ENCODE measurements at regions of chr4 and their contacts with region 1.

Region 1: GRCh38 chr4:73069338-73070073 is at the start of gene COX18:
- DNase-seq: peak; percentile 96
- H3K4me3 Mint-ChIP-seq: peak within 1 kb of the TSS; percentile 92
- H3K27ac Mint-ChIP-seq: peak within 1 kb of the TSS; percentile 99
- H3K4me1 Mint-ChIP-seq: peaks cover 52% of the 10 kb centered on the region
- H3K27me3 Mint-ChIP-seq: no peaks in the 10 kb centered on the region
- total RNA-seq, gene COX18: 19.9 and 22.2 TPM in 2 replicates

Region 2: GRCh38 chr4:73086095-73086868 is 16.8 kb after region 1 on chr4:
- intact Hi-C with region 1: loop called (anchors 1 kb)
- DNase-seq: no peak
- H3K4me3 Mint-ChIP-seq: peak overlapping the region; percentile 56
- H3K27ac Mint-ChIP-seq: no peak overlapping the region
- H3K4me1 Mint-ChIP-seq: peaks cover 12% of the 10 kb centered on the region
- H3K27me3 Mint-ChIP-seq: no peaks in the 10 kb centered on the region

Region 3: GRCh38 chr4:73222466-73223257 is 153.2 kb after region 1 on chr4:
- intact Hi-C with region 1: loop called (anchors 1 kb)
- DNase-seq: peak; percentile 60
- H3K4me3 Mint-ChIP-seq: no peak overlapping the region
- H3K27ac Mint-ChIP-seq: no peak overlapping the region
- H3K4me1 Mint-ChIP-seq: peaks cover 37% of the 10 kb centered on the region
- H3K27me3 Mint-ChIP-seq: no peaks in the 10 kb centered on the region

Region 4: DNA sequence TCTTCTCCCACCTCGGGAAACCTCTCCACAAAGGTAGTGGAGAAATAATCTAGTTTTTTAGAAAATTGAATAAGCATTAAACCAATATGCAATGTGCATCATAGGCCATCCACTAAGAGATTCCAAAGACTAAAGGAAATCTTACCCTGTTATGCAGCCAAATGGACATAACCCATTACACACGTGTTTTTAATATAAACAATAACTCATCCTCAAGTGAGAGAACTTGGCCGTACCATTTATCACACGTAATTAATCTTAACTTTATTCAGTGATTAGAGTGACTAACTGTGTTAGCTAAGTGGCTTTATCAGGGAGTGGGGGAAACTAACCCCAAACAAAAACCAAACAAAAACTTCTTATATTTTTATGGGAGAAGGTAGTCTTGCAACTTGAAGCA is 469.9 kb after region 1 on chr4:
- intact Hi-C with region 1: loop called (anchors 5 kb)
- DNase-seq: no peak
- H3K4me3 Mint-ChIP-seq: no peak overlapping the region
- H3K27ac Mint-ChIP-seq: no peak overlapping the region
- H3K4me1 Mint-ChIP-seq: peaks cover 13% of the 10 kb centered on the region
- H3K27me3 Mint-ChIP-seq: peaks cover 2% of the 10 kb centered on the region

Region 5: GRCh38 chr4:73668782-73669201 is 599.3 kb after region 1 on chr4:
- intact Hi-C with region 1: no loop called
- DNase-seq: no peak
- H3K4me3 Mint-ChIP-seq: no peak overlapping the region
- H3K27ac Mint-ChIP-seq: no peak overlapping the region
- H3K4me1 Mint-ChIP-seq: no peaks in the 10 kb centered on the region
- H3K27me3 Mint-ChIP-seq: no peaks in the 10 kb centered on the region

Region 6: GRCh38 chr4:74157561-74158465 is 1088.3 kb after region 1 on chr4 and contains the start of gene MTHFD2L:
- intact Hi-C with region 1: loop called (anchors 10 kb)
- DNase-seq: peak; percentile 80
- H3K4me3 Mint-ChIP-seq: peak within 1 kb of the TSS; percentile 93
- H3K27ac Mint-ChIP-seq: peak within 1 kb of the TSS; percentile 87
- H3K4me1 Mint-ChIP-seq: peaks cover 30% of the 10 kb centered on the region
- H3K27me3 Mint-ChIP-seq: peaks cover 22% of the 10 kb centered on the region
- total RNA-seq, gene MTHFD2L: 8.9 and 9.9 TPM in 2 replicates